H1 (cell line): ENCODE measurements at regions of chr7 and their contacts with region 1.

Region 1: DNA sequence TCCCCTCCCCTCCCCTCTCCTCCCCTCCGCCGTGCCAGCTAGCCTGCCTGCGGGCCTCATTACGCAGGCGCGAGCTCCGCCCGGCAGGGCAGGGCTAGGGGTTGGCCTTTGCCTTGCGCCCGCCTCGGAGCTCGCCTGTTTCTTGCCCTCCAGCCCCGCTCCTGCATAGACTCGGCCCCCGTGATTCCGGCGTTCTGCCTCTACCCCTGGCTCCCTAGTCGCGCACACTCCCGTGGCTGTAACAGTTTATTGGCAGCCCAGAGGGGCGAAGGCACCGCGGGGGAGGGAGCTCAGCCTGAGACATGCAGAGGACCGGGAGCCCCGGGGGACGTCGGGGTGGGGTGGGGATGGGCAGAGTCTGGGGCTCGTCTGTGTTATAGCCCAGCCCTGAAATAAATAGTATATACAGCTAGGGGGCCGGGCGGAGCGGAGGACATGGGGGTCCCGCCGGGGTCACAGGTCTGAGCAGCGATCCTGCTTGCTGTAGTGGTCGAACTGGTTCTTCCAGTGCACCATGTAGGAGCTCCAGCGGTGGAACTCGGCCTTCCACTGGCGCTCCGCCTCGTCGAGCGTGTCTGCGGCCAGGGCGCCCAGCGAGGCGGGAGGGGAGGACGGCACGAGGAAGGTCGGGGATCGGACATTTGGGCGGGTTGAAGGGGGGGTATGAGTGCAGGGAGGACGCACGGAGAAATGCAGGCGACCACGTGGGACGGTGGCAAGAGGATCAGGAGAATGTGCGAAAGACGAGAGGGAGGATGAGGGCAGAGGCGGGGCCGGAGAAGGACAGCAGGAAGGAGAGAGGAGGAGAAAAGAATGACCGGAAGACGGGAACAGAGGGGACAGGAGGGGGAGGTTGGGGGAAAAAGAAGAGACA is 483 bp upstream of the UFSP1 start:
- DNase-seq: peak; percentile 79 to 92
- H3K4me3 ChIP-seq: peak overlapping the region; percentile 65 to 91 (median 72)
- H3K27ac ChIP-seq: peak overlapping the region; percentile 86
- H3K4me1 ChIP-seq: peaks cover 0 to 21% (median 7%) of the 10 kb centered on the region in 4 experiments; a peak in 6 of 7 replicates
- H3K27me3 ChIP-seq: peaks cover 0 to 12% (median 3%) of the 10 kb centered on the region in 4 experiments; a peak in 5 of 7 replicates
- CTCF ChIP-seq: no peak
- EP300 ChIP-seq: no peak
- POLR2A ChIP-seq: no peak
- RAD21 ChIP-seq: no peak

Region 2: GRCh38 chr7:100803398-100804233 is 86.4 kb before region 1 on chr7:
- CTCF ChIA-PET with region 1: interaction called, 14 read pairs
- POLR2A ChIA-PET with region 1: interaction called, 8 read pairs
- DNase-seq: peak in 1 of 2 experiments; percentile 63
- H3K4me3 ChIP-seq: no peak overlapping the region
- H3K27ac ChIP-seq: no peak overlapping the region
- H3K4me1 ChIP-seq: peaks cover 0 to 8% (median 3%) of the 10 kb centered on the region in 4 experiments; a peak in 5 of 7 replicates
- H3K27me3 ChIP-seq: no peaks in the 10 kb centered on the region
- CTCF ChIP-seq: no peak
- EP300 ChIP-seq: no peak
- POLR2A ChIP-seq: no peak
- RAD21 ChIP-seq: no peak

Region 3: DNA sequence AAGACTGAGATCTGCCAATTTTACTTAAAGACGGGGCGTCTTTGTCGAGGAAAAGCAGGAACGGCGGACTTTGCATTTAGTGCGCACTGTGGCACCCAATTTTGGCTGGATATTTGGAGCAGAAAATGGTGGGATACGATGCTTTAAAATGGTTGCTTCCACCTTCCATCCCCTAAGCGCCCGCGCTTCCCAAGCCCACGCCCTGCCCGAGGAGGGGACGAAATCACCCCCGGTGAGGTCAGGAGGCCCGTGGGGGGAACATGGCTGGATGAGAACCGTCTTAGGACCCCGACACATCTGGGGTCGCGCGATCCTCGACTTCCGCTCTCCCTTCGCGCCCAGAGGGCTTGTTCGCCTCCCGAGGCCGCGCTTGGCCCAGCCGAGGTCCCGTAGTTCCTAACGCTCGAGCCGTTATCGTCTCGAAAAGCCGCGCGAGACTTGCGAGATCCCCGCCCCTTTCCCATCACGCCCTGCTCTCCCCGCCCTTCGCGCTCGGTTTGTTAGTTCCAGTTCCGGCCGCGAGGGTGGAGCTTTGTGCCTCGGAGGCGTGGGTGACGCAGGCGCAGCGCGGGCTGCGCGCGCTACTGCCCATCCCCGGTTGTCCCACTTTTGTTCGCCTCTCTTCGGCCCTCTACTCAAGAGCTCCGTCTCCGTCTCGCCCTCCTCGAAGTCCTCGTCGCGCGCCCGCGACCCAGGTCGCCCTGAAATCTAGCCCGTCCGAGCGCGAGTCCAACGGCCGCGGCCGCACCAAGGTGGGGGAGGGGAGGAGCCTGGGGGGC is 15.2 kb before region 1 on chr7 and contains the start of gene SRRT:
- CTCF ChIA-PET with region 1: interaction called, 8 read pairs
- POLR2A ChIA-PET with region 1: interaction called, 313 read pairs
- DNase-seq: peak; percentile 95 to 97
- H3K4me3 ChIP-seq: peak within 1 kb of the TSS; percentile 81 to 93 (median 91)
- H3K27ac ChIP-seq: peak within 1 kb of the TSS; percentile 93
- H3K4me1 ChIP-seq: peaks cover 0 to 9% (median 1%) of the 10 kb centered on the region in 4 experiments; a peak in 3 of 7 replicates
- H3K27me3 ChIP-seq: no peaks in the 10 kb centered on the region
- CTCF ChIP-seq: peak in 1 of 3 experiments; percentile 19; a peak in 1 of 4 replicates
- EP300 ChIP-seq: no peak; a peak in 1 of 3 replicates
- POLR2A ChIP-seq: peak in 1 of 2 experiments; percentile 98; a peak in 2 of 3 replicates
- RAD21 ChIP-seq: no peak
- total RNA-seq, gene SRRT: 237 and 239 TPM in 2 replicates

Region 4: DNA sequence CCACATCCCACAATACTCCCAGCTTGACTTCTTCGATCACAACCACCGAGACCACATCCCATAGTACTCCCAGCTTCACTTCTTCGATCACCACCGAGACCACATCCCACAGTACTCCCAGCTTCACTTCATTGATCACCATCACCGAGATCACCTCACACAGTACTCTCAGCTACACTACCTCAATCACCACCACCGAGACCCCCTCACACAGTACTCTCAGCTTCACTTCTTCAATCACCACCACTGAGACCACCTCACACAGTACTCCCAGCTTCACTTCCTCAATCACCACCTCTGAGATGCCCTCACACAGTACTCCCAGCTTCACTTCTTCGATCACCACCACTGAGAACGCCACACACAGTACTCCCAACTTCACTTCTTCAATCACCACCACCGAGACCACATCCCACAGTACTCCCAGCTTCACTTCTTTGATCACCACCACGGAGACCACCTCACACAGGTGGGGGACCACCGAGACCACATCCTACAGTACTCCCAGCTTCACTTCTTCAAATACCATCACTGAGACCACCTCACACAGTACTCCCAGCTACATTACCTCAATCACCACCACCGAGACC is 67.9 kb after region 1 on chr7:
- CTCF ChIA-PET with region 1: interaction called, 11 read pairs
- POLR2A ChIA-PET with region 1: interaction called, 3 read pairs
- DNase-seq: no peak
- H3K4me3 ChIP-seq: no peak overlapping the region
- H3K27ac ChIP-seq: no peak overlapping the region
- H3K4me1 ChIP-seq: no peaks in the 10 kb centered on the region
- H3K27me3 ChIP-seq: peaks cover 0 to 2% (median 0%) of the 10 kb centered on the region in 4 experiments; a peak in 1 of 7 replicates
- CTCF ChIP-seq: no peak
- EP300 ChIP-seq: no peak
- POLR2A ChIP-seq: no peak
- RAD21 ChIP-seq: no peak

Region 5: DNA sequence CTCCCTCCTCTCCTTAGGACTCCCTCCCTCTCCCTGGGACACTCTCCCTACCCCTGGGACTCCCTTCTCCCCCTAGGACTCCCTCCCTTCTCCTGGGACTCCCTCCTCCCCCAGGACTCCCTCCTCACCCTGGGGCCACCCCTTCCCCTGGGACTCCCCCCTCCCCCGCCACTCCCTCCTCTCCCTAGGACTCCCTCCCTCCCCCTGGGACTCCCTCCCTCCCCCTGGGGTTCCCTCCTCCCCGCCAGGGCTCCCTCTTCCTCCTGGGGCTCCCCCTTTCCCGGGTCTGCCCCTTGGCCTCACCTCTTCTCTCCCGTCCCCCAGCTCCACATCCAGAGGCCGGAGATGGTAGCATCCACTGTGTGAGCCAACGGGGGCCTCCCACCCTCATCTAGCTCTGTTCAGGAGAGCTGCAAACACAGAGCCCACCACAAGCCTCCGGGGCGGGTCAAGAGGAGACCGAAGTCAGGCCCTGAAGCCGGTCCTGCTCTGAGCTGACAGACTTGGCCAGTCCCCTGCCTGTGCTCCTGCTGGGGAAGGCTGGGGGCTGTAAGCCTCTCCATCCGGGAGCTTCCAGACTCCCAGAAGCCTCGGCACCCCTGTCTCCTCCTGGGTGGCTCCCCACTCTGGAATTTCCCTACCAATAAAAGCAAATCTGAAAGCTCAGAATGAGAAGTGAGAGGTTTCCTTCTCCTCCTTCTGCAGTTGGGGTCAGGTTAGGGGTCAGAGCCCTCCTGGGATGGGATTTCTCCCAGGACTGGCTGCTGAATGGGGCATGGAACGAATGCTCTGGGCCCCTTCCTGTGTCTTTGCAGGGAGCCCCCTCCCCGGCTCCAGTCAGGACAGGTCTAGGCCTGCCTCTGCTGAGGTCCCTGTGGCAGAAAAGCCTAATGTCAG is 128.5 kb after region 1 on chr7:
- CTCF ChIA-PET with region 1: interaction called, 16 read pairs
- POLR2A ChIA-PET with region 1: interaction called, 6 read pairs
- DNase-seq: peak in 1 of 2 experiments; percentile 82
- H3K4me3 ChIP-seq: peak overlapping the region in 3 of 4 experiments; percentile 14 to 46 (median 19); a peak in 4 of 8 replicates
- H3K27ac ChIP-seq: peak overlapping the region; percentile 43; the same call in 1 of the 2 replicates
- H3K4me1 ChIP-seq: peaks cover 13 to 27% (median 19%) of the 10 kb centered on the region in 4 experiments
- H3K27me3 ChIP-seq: no peaks in the 10 kb centered on the region; a peak in 1 of 7 replicates
- CTCF ChIP-seq: no peak
- EP300 ChIP-seq: no peak
- POLR2A ChIP-seq: no peak
- RAD21 ChIP-seq: no peak

Region 6: DNA sequence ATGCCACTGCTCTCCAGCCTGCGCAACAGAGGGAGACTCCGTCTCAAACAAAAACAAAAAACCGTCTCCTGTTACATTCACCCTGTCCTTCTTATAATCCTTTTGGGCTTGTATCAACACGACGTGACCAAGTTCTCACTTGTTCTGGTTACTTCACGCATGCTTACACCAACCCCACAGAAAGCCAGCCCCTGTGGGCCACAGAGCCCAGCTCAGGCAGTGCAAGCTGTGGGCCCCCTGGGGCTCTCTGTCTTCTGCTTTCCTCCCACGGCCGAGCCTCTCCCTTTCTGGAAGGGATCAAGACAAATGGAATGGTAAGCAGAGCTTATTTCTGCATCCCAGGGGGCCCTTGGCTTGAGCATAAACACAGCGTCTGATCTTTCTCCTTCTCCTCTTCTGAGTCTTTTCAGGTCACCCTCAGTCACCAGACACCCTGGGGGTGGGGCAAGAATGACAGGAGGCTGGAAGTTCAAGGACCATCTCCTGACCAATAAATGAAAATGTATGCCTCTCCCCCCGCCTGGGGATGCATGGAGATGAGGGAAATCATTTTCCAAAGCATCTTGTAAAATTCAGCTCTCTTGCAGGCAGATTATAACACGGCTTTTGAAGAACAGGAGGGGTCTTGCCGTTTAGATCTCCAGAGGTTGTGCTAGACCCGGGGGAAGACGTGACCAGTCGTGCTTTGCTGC is 176.3 kb after region 1 on chr7:
- CTCF ChIA-PET with region 1: interaction called, 11 read pairs
- POLR2A ChIA-PET with region 1: interaction called, 3 read pairs
- DNase-seq: no peak
- H3K4me3 ChIP-seq: no peak overlapping the region
- H3K27ac ChIP-seq: no peak overlapping the region
- H3K4me1 ChIP-seq: peaks cover 0 to 11% (median 8%) of the 10 kb centered on the region in 4 experiments; a peak in 5 of 7 replicates
- H3K27me3 ChIP-seq: no peaks in the 10 kb centered on the region
- CTCF ChIP-seq: no peak
- EP300 ChIP-seq: no peak
- POLR2A ChIP-seq: no peak
- RAD21 ChIP-seq: no peak

Region 7: GRCh38 chr7:101085162-101085987 is 195.4 kb after region 1 on chr7 and contains the start of gene TRIM56:
- CTCF ChIA-PET with region 1: interaction called, 4 read pairs
- POLR2A ChIA-PET with region 1: interaction called, 10 read pairs
- DNase-seq: peak in 1 of 2 experiments; percentile 86
- H3K4me3 ChIP-seq: peak within 1 kb of the TSS; percentile 62 to 78 (median 75)
- H3K27ac ChIP-seq: peak within 1 kb of the TSS; percentile 32; the same call in 1 of the 2 replicates
- H3K4me1 ChIP-seq: peaks cover 0 to 6% (median 3%) of the 10 kb centered on the region in 4 experiments; a peak in 3 of 7 replicates
- H3K27me3 ChIP-seq: no peaks in the 10 kb centered on the region
- CTCF ChIP-seq: no peak
- EP300 ChIP-seq: no peak
- POLR2A ChIP-seq: no peak; a peak in 1 of 3 replicates
- RAD21 ChIP-seq: no peak
- total RNA-seq, gene TRIM56: 17.5 and 18.8 TPM in 2 replicates